ENCODE measurements at regions of chr15 and their contacts with region 1.

Region 1: DNA sequence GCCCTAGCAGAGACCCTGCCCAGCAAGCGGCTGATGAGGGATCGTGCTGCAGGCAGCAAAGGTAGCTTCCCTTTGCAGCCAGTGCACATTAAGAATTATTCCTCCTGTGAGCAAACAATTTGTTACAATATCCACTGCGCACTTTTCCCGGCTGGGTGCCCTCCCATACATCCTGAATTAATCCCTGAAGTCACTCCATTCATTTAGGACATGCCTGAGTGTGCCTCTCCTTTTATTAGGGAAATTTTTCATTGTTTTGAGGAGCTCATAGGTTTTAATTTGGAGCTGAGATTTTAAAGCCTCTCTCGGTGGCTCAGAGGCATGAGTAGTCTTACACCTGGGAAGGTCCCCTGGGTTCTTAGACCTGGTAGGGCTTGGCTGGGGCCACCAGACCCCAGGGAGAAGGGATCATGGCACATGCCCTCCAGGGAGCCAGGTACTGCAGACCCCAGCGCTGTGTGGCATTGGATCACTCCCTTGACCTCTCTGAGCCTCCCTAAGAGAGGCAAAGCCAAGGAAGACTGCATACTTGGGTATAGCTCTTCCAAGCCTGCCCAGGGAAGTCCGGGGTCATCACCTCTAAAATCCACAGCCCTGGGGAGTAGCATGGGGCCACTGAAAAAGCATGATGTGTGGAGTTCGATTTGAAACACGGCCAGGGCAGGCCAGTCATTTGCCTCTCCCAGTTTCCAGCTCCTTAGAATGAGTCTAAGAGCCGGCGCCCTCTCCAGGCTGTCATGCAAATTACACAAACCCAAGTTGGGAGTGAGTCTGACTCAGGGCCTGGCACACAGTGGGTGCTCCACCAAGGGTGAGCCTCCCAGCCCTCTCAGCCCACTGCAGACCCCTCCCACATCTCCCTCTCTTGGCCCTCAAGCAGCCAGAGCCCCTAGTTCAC is 151.9 kb upstream of the LINGO1 start:
- DNase-seq: peak in 1 of 2 experiments; percentile 88
- H3K4me3 ChIP-seq: no peak overlapping the region
- H3K27ac ChIP-seq: no peak overlapping the region
- H3K4me1 ChIP-seq: peaks cover 0 to 10% (median 7%) of the 10 kb centered on the region in 4 experiments; a peak in 6 of 7 replicates
- H3K27me3 ChIP-seq: no peaks in the 10 kb centered on the region
- CTCF ChIP-seq: peak; percentile 55 to 81 (median 79)
- EP300 ChIP-seq: no peak
- POLR2A ChIP-seq: no peak
- RAD21 ChIP-seq: peak; percentile 67 to 78

Region 2: DNA sequence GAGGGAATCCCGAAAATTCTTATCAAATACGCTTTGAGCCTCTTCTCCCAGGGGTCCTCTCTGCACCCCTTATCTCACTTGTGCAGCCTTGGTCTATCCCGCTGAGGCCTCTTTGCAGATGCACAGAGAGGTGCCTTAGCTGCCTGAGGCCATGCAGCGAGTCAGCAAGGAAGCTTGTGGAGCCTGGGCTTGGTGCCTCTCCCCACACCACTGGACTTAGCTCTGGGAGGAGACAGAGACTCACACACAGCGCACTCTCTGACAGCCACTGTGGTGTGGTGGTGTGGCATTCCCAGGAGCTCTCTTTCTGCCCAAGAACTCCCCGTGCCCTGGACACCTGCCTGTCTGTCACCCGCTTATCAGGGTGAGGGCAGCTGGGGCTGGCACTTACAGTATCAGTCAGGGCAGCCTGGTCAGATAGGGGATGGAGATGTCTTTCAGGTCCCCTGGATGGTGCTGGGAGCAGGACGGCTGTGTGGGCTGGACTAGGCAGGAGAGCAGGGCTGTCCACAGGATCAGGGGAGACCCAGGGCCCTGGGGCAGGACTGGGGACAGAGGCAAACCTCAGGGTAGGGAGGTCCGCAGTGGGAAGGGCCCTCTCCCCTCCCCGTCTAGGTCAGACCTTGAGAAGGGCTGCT is 141.7 kb before region 1 on chr15:
- CTCF ChIA-PET with region 1: interaction called, 11 read pairs
- POLR2A ChIA-PET with region 1: no interaction called
- DNase-seq: no peak
- H3K4me3 ChIP-seq: no peak overlapping the region
- H3K27ac ChIP-seq: no peak overlapping the region
- H3K4me1 ChIP-seq: peaks cover 0 to 5% (median 2%) of the 10 kb centered on the region in 4 experiments; a peak in 3 of 7 replicates
- H3K27me3 ChIP-seq: no peaks in the 10 kb centered on the region; a peak in 1 of 7 replicates
- CTCF ChIP-seq: no peak
- EP300 ChIP-seq: no peak
- POLR2A ChIP-seq: no peak
- RAD21 ChIP-seq: no peak

Region 3: DNA sequence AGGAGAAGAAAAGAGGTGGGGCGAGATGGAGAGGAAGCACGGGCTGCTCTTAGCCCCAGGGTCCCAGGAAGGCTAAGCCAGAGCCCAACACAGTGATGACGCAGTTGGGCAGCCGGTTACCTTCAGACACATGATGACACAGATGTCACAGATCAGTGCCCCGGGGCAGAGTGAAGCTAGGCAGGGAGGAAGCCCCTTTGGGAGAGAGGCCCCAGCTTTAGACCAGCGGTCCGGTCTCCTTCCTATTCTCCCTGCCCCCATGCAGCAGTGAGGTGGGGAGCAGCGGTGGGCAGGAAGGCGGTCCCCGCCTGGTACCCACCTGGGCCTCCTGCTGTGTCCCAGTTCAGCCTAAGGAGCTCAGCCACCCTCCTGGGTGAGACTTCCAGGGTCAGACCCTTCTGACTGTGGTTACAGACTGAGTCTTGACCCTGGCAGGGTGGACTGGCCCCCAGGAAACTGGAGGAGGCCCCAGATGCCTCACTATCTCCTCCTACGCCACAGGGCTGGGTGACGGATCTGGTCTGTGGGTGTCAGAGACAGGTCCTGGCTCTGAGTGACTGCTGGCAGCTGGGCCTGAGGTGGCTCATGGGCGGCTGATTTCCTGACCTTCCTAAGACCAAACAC is 113.2 kb before region 1 on chr15:
- CTCF ChIA-PET with region 1: interaction called, 11 read pairs
- POLR2A ChIA-PET with region 1: no interaction called
- DNase-seq: no peak
- H3K4me3 ChIP-seq: no peak overlapping the region
- H3K27ac ChIP-seq: no peak overlapping the region
- H3K4me1 ChIP-seq: no peaks in the 10 kb centered on the region; a peak in 2 of 7 replicates
- H3K27me3 ChIP-seq: no peaks in the 10 kb centered on the region
- CTCF ChIP-seq: no peak
- EP300 ChIP-seq: no peak
- POLR2A ChIP-seq: no peak
- RAD21 ChIP-seq: no peak

Region 4: DNA sequence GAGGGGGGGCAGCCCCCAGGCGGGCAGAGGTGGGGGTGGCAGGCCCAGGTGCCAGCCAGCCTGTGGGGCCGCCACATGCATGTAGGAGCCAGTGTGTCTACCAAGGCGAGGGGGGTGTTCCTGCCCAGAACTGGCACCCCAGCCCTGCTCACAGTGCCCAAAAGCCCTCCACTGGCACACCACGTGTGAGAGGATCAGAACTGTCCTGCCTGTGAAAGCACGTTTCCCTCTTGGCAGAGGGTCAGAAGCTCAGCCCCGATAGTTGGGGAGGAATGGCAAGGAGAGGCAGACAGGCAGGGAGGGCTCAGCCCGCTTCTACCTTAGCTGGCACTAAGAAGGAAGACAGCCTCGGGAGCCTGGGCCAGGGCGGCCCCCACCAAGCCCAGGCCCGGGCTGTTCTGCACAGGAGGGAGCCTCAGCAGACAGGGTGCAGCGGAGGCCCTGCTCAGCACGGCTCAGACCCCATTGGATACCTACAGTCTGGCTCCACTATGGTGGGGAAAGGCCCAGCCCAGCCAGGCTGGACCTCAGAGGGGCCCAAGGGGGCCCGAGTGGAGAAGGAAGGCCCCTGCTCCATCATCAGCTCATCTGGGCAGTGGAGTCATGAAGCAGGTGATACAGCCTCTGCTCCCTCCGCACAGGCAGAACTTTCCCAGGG is 67.2 kb before region 1 on chr15:
- CTCF ChIA-PET with region 1: interaction called, 38 read pairs
- POLR2A ChIA-PET with region 1: no interaction called
- DNase-seq: no peak
- H3K4me3 ChIP-seq: no peak overlapping the region
- H3K27ac ChIP-seq: no peak overlapping the region
- H3K4me1 ChIP-seq: peaks cover 0 to 5% (median 1%) of the 10 kb centered on the region in 4 experiments; a peak in 3 of 7 replicates
- H3K27me3 ChIP-seq: no peaks in the 10 kb centered on the region
- CTCF ChIP-seq: no peak
- EP300 ChIP-seq: no peak
- POLR2A ChIP-seq: no peak
- RAD21 ChIP-seq: no peak

Region 5: DNA sequence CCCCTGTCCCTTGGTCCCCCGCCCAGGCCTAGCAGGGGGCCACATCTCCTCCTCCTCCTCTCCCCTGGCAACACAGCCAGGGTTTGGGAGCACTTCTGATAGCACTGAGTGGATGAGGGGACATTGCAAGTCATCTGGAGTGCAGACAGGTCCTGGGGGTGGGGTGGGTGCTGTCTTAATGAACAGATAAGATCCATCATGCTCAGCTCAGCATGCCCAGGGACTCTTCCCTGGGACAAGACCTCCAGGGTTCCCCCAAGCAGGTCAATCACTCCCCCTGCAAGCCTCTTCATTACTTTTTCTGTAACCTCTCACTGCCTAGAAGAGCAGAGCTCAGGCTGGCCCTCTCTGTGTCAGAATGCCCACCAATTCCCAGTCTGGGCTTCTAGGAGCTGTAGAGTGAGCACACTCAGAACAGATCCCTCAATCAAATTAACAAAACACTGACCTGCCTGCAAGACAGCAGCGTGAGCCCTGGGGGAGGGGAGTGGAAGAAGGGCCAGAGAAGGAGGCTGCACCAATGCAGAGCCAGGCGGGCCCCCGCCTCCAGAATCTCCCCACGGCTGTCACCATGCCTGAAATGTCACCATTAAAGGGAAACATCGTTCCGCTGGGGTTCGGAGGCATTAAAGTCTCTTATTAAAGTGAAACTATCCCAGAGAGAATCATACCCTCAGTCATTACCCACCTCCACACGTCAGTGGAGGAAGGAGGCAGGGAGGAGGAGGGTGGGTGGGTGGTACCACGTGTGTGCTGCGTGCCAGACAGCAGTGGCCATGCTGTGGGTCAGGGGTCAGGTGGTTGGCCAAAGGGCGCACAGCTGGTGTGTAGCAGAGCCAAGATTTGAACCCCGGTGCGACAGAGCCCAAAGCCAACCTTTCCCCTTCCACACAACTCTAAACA is 37.2 kb before region 1 on chr15:
- CTCF ChIA-PET with region 1: interaction called, 19 read pairs
- POLR2A ChIA-PET with region 1: interaction called, 3 read pairs
- DNase-seq: no peak
- H3K4me3 ChIP-seq: no peak overlapping the region
- H3K27ac ChIP-seq: no peak overlapping the region
- H3K4me1 ChIP-seq: peaks cover 9 to 20% (median 14%) of the 10 kb centered on the region in 4 experiments
- H3K27me3 ChIP-seq: peaks cover 0 to 9% (median 0%) of the 10 kb centered on the region in 4 experiments; a peak in 2 of 7 replicates
- CTCF ChIP-seq: no peak
- EP300 ChIP-seq: no peak
- POLR2A ChIP-seq: no peak
- RAD21 ChIP-seq: no peak

Region 6: GRCh38 chr15:77798151-77798835 is 13.6 kb after region 1 on chr15:
- CTCF ChIA-PET with region 1: interaction called, 78 read pairs
- POLR2A ChIA-PET with region 1: no interaction called
- DNase-seq: no peak
- H3K4me3 ChIP-seq: no peak overlapping the region
- H3K27ac ChIP-seq: no peak overlapping the region
- H3K4me1 ChIP-seq: 0 out of 7 replicates have a peak, but pooled peaks cover 0 to 3% (median 0%) of the 10 kb centered on the region in 4 experiments
- H3K27me3 ChIP-seq: no peaks in the 10 kb centered on the region
- CTCF ChIP-seq: no peak
- EP300 ChIP-seq: no peak
- POLR2A ChIP-seq: no peak
- RAD21 ChIP-seq: no peak

Region 7: DNA sequence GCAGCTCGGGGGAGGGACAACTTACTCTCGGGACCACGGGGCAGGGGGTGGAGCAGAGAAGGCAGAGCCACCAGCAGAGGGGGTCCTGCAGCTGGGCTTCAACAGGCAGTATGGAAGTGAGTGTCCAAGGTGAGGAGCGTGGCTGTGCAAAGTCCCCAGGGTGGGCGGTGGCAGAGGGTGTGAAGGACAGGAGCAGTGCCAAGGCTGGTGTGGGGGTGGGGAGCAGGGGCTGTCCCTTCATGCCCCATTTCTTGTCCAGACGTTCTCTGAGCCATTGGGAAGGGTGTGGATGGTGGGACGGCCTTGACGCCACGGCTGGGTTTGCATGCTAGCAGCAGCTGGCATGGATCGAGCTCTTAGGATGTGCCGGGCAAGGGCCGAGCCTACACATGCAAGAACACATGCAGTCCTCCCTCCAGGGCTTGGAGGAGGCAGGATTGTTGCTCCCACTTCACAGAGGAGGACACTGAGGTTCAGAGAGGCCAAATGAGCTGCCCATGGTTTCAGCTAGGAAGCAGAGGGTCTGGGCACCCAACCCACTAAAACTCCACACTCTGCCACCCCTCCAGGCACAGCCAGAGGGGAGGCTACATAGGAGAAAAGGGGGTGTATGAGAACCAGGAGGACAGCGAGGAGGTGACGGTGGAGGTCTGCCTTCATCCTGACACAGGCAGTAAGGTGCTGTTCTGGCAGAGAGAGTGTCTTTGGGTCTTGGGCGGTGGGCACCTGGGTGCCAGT is 199.2 kb after region 1 on chr15:
- CTCF ChIA-PET with region 1: no interaction called
- POLR2A ChIA-PET with region 1: no interaction called
- DNase-seq: peak in 1 of 2 experiments; percentile 41
- H3K4me3 ChIP-seq: no peak overlapping the region
- H3K27ac ChIP-seq: no peak overlapping the region
- H3K4me1 ChIP-seq: peaks cover 0 to 16% (median 11%) of the 10 kb centered on the region in 4 experiments; a peak in 6 of 7 replicates
- H3K27me3 ChIP-seq: no peaks in the 10 kb centered on the region
- CTCF ChIP-seq: peak in 2 of 3 experiments; percentile 18 to 45; a peak in 1 of 4 replicates
- EP300 ChIP-seq: no peak
- POLR2A ChIP-seq: no peak
- RAD21 ChIP-seq: peak in 1 of 2 experiments; percentile 33; a peak in 1 of 4 replicates

Measured in H1 (cell line).